Left cardiac atrium (tissue), 4 donors: ENCODE measurements at regions of chr9 and their contacts with region 1.

Region 1: DNA sequence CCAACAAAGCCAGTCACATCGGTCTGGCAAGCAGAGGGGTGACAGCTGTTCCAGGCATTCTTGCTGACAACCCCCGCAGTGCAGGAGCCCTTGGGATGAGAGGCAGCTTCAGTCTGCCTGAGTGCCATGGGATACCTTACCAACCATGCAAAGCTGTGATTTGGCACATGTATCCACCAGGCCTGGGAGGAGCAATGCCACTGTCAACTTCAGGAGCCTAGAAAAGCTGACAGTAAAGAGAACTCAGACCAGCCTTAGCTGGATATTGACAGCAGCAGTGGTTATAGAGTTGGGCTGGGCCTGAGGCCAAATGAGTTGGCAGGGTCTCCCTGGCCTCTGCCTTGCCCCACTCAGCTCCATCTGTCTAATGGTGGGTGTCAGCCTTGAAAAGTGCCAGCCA is 10.1 kb upstream of the PLPPR1 start:
- DNase-seq: no peak
- ATAC-seq: no peak

Region 2: DNA sequence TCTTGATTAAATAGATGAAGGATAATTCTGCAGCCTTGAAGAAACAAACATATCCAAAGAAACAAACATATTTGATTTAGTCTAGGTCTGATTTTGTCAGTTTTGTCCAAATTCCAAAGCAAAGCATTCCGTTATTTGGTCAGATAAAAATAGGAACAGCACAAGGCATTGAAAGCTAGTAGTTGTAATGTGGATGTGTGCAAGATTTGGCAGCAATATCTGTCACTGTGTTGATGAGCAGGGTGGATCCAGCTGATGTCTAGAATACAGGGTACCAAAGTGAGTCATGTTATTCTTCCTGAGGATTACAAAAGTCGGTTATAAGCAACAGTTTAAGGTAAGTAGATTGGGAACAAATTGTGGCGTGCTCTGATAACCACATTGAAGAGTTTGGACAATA is 59.2 kb before region 1 on chr9:
- intact Hi-C with region 1: loop called in 1 of 2 experiments (anchors 10 kb)
- DNase-seq: no peak
- ATAC-seq: no peak